ENCODE measurements at regions of chr1 and their contacts with region 1.

Region 1: GRCh38 chr1:96721416-96722160 is at the start of gene PTBP2:
- DNase-seq: peak; percentile 80
- H3K4me3 Mint-ChIP-seq: peak within 1 kb of the TSS; percentile 95
- H3K27ac Mint-ChIP-seq: peak within 1 kb of the TSS; percentile 95
- H3K4me1 Mint-ChIP-seq: peaks cover 20% of the 10 kb centered on the region
- H3K27me3 Mint-ChIP-seq: peaks cover 9% of the 10 kb centered on the region
- total RNA-seq, gene PTBP2: 17.1 and 18.8 TPM in 2 replicates

Region 2: DNA sequence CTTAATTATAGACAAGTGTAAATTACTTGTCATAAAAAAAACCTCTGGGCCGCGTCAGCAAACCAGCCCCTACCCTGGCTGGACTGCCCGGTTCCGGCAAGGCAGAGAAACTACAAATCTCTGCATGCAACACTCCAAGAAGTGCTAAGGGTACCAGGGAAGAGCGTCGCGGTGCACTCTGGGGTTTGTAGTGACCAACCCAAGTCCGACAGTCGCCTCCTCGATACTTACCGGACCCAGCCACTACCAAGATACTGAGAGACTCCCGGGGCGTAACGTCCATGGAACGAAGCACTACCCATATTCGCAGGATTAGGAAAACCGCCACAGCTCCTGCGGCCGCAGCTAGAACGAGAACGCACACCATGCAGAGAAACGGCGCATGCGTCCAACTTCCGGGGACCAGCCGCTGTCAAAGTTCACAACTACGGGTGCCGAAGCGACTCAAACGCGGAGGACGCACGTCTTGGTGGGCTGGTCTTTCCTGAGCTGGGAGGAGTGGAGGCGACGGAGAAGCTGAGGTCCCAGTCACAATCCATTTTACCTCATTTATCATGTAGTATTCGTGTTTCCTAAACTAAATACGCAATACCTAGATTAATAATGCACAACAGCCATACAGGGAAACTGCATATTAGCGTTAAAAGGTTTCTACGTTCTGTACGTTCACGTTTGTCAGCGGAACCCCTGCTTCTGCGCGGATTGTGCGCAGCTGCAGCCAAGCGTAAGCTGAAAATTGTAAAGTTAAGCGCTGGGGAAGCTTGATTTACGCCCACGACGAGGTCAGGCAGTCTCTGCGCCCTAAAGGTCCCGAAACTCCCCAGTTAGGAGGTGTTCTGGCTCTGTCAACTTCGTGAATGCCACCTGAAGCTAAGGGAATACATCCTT is 1648.8 kb before region 1 on chr1 and contains the start of gene ALG14:
- intact Hi-C with region 1: loop called (anchors 2 kb)
- DNase-seq: peak; percentile 88
- H3K4me3 Mint-ChIP-seq: peak within 1 kb of the TSS; percentile 98
- H3K27ac Mint-ChIP-seq: peak within 1 kb of the TSS; percentile 95
- H3K4me1 Mint-ChIP-seq: peaks cover 11% of the 10 kb centered on the region
- H3K27me3 Mint-ChIP-seq: no peaks in the 10 kb centered on the region
- total RNA-seq, gene ALG14: 2.4 and 3.1 TPM in 2 replicates

Region 3: DNA sequence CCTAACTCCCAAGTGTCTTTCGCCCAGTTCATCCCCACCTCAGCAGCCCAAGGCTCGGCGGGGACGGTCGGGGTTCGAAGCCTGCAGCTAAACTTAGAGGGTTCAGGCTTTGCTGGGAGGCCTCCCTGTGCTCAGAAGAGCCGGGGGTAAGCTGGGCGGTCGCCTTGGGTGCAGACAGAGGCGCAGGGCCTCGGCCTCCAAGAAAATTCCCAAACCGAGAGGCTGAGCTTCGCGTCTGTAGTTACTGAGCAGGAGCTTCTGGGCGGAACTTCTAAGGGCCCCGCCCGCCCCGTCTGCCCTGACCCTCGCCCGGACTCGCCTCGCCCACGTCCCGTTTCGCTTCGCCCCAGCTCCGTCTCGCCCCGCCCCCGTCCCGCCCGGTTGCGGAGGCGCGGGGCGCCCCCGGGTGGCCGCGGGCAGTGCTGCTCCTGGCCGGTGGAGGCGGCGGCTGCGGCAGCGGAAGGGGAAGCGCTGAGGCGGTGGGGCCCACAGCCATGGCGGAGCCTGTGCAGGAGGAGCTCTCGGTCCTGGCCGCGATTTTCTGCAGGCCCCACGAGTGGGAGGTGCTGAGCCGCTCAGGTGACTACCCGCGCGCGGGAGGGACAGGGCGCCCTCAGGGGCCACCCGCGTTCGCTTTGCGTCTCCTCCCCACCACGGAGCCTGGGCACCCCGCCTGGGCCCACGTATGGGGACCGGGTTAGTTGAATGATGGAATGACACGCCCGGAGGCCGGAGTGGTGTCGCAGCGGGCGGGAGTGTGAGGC is 1487.7 kb before region 1 on chr1 and contains the start of gene RWDD3:
- intact Hi-C with region 1: loop called (anchors 10 kb)
- DNase-seq: peak; percentile 91
- H3K4me3 Mint-ChIP-seq: peak within 1 kb of the TSS; percentile 95
- H3K27ac Mint-ChIP-seq: peak within 1 kb of the TSS; percentile 89
- H3K4me1 Mint-ChIP-seq: peaks cover 30% of the 10 kb centered on the region
- H3K27me3 Mint-ChIP-seq: peaks cover 27% of the 10 kb centered on the region
- total RNA-seq, gene RWDD3: 11.7 and 15.5 TPM in 2 replicates

Region 4: GRCh38 chr1:96362623-96363022 is 359.0 kb before region 1 on chr1:
- intact Hi-C with region 1: loop called (anchors 5 kb)
- DNase-seq: no peak
- H3K4me3 Mint-ChIP-seq: peak overlapping the region; percentile 0
- H3K27ac Mint-ChIP-seq: peak overlapping the region; percentile 82
- H3K4me1 Mint-ChIP-seq: peaks cover 24% of the 10 kb centered on the region
- H3K27me3 Mint-ChIP-seq: no peaks in the 10 kb centered on the region

Region 5: GRCh38 chr1:96771847-96772246 is 50.3 kb after region 1 on chr1:
- intact Hi-C with region 1: loop called (anchors 5 kb)
- DNase-seq: no peak
- H3K4me3 Mint-ChIP-seq: no peak overlapping the region
- H3K27ac Mint-ChIP-seq: no peak overlapping the region
- H3K4me1 Mint-ChIP-seq: peaks cover 6% of the 10 kb centered on the region
- H3K27me3 Mint-ChIP-seq: no peaks in the 10 kb centered on the region

Region 6: GRCh38 chr1:96808191-96808590 is 86.6 kb after region 1 on chr1:
- intact Hi-C with region 1: loop called (anchors 5 kb)
- DNase-seq: no peak
- H3K4me3 Mint-ChIP-seq: no peak overlapping the region
- H3K27ac Mint-ChIP-seq: no peak overlapping the region
- H3K4me1 Mint-ChIP-seq: peaks cover 3% of the 10 kb centered on the region
- H3K27me3 Mint-ChIP-seq: no peaks in the 10 kb centered on the region

Region 7: GRCh38 chr1:97920832-97921571 is 1199.4 kb after region 1 on chr1 and contains the start of gene DPYD:
- intact Hi-C with region 1: loop called (anchors 1 kb)
- DNase-seq: peak; percentile 83
- H3K4me3 Mint-ChIP-seq: peak within 1 kb of the TSS; percentile 93
- H3K27ac Mint-ChIP-seq: peak within 1 kb of the TSS; percentile 95
- H3K4me1 Mint-ChIP-seq: peaks cover 55% of the 10 kb centered on the region
- H3K27me3 Mint-ChIP-seq: no peaks in the 10 kb centered on the region
- total RNA-seq, gene DPYD: 11.9 and 12.5 TPM in 2 replicates

Region 8: DNA sequence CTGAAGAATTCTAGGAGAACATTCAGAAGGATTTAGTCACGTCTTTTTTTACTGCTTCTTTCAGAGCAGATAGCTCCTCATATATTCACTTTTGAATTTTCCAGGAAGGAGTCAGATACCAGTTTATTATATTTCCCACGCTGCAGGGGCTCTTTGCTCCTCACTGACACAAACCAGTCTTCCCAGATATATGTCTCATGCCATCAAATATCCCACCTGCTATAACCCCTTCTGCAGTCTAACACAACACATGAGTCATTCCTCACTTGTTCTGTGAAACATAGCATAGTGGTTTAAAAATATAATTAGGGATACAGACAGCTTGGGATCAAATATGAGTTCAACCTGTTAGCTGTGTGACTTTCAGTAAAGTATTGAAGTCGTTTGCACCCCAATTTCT is 1451.0 kb after region 1 on chr1:
- intact Hi-C with region 1: no loop called
- DNase-seq: no peak
- H3K4me3 Mint-ChIP-seq: no peak overlapping the region
- H3K27ac Mint-ChIP-seq: no peak overlapping the region
- H3K4me1 Mint-ChIP-seq: no peaks in the 10 kb centered on the region
- H3K27me3 Mint-ChIP-seq: no peaks in the 10 kb centered on the region